ENCODE measurements at regions of chr6 and their contacts with region 1.

Region 1: GRCh38 chr6:30717042-30717844 is at the start of gene MDC1:
- DNase-seq: peak; percentile 100
- H3K4me3 ChIP-seq: peak within 1 kb of the TSS; percentile 69 to 77
- H3K27ac ChIP-seq: peak within 1 kb of the TSS; percentile 93 to 94
- H3K4me1 ChIP-seq: peaks cover 0 to 24% of the 10 kb centered on the region in 2 donors
- H3K27me3 ChIP-seq: no peaks in the 10 kb centered on the region
- CTCF ChIP-seq: peak in 1 of 3 experiments; percentile 65
- total RNA-seq, gene MDC1: 27.1 TPM

Region 2: GRCh38 chr6:30489081-30490025 is 227.9 kb before region 1 on chr6 and contains the start of gene HLA-E:
- intact Hi-C with region 1: loop called (anchors 10 kb)
- DNase-seq: peak; percentile 90 to 99
- H3K4me3 ChIP-seq: peak within 1 kb of the TSS; percentile 91 to 97
- H3K27ac ChIP-seq: peak within 1 kb of the TSS; percentile 98 to 99
- H3K4me1 ChIP-seq: peaks cover 6 to 14% of the 10 kb centered on the region in 2 donors
- H3K27me3 ChIP-seq: no peaks in the 10 kb centered on the region
- CTCF ChIP-seq: no peak
- total RNA-seq, gene HLA-E: 896 TPM

Region 3: GRCh38 chr6:30646458-30647241 is 70.6 kb before region 1 on chr6 and contains the start of gene C6orf136:
- intact Hi-C with region 1: no loop called
- DNase-seq: peak; percentile 67 to 95
- H3K4me3 ChIP-seq: peak within 1 kb of the TSS; percentile 89 to 96
- H3K27ac ChIP-seq: peak within 1 kb of the TSS; percentile 85 to 93
- H3K4me1 ChIP-seq: peaks cover 0 to 12% of the 10 kb centered on the region in 2 donors
- H3K27me3 ChIP-seq: no peaks in the 10 kb centered on the region
- CTCF ChIP-seq: no peak
- total RNA-seq, gene C6orf136: 6.2 TPM

Region 4: GRCh38 chr6:30678964-30679726 is 38.1 kb before region 1 on chr6:
- intact Hi-C with region 1: loop called (anchors 1 kb)
- DNase-seq: peak; percentile 38 to 93
- H3K4me3 ChIP-seq: peak overlapping the region; percentile 32 to 91
- H3K27ac ChIP-seq: peak overlapping the region; percentile 99
- H3K4me1 ChIP-seq: peaks cover 11 to 35% of the 10 kb centered on the region in 2 donors
- H3K27me3 ChIP-seq: no peaks in the 10 kb centered on the region
- CTCF ChIP-seq: peak; percentile 94 to 98 (median 97)

Region 5: DNA sequence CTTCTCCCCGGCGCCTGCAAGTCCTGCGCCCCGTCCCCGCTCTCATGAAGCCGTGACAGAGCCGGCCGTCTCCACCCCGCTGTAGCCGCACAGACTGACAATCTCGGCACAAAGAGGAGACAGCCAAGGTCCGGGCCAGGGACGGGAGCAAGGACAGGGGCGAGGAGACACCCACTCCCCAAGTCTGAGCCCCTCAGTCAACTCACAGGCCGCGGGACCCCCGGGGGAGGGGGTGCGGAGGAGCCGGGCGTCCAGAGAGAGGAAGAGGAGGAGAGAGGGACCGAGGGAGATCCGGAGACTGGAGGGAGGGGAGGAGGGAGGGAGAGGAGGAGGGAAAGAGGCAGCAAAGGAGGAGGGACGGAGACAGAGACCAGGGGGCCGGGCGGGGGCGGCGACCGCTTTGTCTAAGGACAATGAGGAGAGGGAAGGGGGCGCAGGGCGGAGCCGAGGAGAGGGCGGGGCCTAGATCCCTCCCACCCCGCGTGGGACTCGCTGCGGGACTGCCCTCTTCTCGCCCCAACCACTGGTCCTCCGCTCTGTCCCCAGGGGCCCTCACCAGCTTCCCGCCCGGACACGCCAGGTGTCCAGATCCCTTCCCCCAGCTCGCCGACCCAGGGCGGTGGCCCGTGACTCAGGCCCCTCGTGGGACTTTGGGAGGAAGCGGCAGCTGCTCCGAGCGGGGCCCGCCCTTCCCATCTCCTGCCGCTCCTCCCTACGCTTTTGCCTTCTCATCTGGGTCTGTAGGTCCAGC is 30.2 kb before region 1 on chr6:
- intact Hi-C with region 1: loop called (anchors 1 kb)
- DNase-seq: peak; percentile 91 to 98
- H3K4me3 ChIP-seq: peak overlapping the region; percentile 75 to 91
- H3K27ac ChIP-seq: peak overlapping the region; percentile 99
- H3K4me1 ChIP-seq: peaks cover 7 to 31% of the 10 kb centered on the region in 2 donors
- H3K27me3 ChIP-seq: no peaks in the 10 kb centered on the region
- CTCF ChIP-seq: no peak

Region 6: DNA sequence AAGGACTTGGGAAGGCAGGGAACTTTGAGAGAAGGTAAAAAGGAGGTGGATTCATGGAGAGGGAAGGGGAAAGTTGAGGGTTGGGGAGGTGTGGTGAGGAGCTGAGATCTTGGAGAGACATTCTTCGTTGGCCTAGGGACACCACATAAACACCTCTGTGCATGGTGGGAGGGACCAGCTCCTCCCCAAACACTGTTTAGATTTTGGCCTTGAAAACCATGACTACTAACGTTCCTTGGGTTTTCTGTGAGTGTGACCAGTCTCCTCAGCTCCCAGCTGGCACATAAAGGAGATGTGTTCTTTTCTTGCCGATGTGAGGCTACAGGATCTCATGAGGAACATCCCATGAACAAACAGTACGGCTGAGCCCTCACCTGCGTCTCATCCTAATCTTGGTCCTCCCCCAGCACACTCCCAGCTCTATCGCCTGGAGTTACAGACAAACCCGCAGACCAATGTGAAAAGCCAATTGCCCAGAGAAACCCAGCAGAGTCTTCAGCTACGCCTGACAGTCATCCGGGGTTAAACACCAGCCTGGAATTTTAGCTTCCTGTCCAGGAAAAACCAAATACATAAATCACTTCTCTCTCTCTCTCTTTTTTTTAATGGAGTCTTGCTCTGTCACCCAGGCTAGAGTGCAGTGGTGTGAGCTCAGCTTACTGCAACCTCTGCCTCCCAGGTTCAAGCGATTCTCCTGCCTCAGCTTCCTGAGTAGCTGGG is 145.1 kb after region 1 on chr6:
- intact Hi-C with region 1: no loop called
- DNase-seq: peak in 1 of 2 donors; percentile 21
- H3K4me3 ChIP-seq: no peak overlapping the region
- H3K27ac ChIP-seq: no peak overlapping the region
- H3K4me1 ChIP-seq: no peaks in the 10 kb centered on the region
- H3K27me3 ChIP-seq: no peaks in the 10 kb centered on the region
- CTCF ChIP-seq: no peak

Region 7: GRCh38 chr6:30877419-30878371 is 160.5 kb after region 1 on chr6:
- intact Hi-C with region 1: loop called (anchors 5 kb)
- DNase-seq: peak; percentile 67 to 97
- H3K4me3 ChIP-seq: peak overlapping the region; percentile 45 to 57
- H3K27ac ChIP-seq: peak overlapping the region; percentile 81 to 87
- H3K4me1 ChIP-seq: peaks cover 0 to 11% of the 10 kb centered on the region in 2 donors
- H3K27me3 ChIP-seq: no peaks in the 10 kb centered on the region
- CTCF ChIP-seq: peak; percentile 86 to 90 (median 89)